ENCODE measurements at regions of chr20 and their contacts with region 1.

Region 1: DNA sequence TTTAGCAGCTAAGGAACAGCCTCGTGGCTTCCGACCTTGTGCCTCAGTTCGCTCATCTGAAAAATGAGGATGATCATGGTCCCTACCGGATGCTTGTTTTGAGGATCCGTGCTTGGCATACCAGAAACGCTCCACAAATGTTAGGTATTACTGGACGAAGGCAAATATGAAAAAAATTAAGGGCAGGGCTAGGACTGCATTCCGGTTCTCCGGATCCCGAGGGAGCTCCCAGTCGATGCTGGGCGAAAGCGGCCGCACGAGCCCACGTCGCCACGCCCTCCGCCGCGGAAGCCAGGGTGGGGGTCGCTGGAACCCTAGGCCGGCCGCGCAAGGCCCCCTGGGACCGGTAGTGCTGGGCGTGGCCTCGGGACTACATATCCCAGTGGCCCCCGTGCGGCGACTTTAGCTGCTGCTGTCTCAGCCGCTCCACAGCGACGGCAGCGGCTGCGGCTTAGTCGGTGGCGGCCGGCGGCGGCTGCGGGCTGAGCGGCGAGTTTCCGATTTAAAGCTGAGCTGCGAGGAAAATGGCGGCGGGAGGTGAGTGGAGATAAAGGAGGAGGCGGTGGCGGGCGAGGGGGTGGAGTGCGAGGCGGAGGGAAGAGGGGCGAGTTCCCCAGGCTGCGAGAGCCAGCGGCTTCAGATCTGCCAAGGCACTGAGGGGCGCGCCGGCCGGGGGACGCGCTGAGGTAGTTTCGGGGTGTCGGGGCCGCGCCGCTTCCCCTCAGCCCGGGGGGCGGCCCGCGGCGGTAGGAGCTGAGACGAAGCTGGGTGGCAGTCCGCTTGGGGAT is at the start of gene NCOA3:
- DNase-seq: peak; percentile 95
- H3K4me3 Mint-ChIP-seq: peak within 1 kb of the TSS; percentile 94
- H3K27ac Mint-ChIP-seq: peak within 1 kb of the TSS; percentile 97
- H3K4me1 Mint-ChIP-seq: peaks cover 59% of the 10 kb centered on the region
- H3K27me3 Mint-ChIP-seq: no peaks in the 10 kb centered on the region
- total RNA-seq, gene NCOA3: 81.0 to 83.1 TPM

Region 2: DNA sequence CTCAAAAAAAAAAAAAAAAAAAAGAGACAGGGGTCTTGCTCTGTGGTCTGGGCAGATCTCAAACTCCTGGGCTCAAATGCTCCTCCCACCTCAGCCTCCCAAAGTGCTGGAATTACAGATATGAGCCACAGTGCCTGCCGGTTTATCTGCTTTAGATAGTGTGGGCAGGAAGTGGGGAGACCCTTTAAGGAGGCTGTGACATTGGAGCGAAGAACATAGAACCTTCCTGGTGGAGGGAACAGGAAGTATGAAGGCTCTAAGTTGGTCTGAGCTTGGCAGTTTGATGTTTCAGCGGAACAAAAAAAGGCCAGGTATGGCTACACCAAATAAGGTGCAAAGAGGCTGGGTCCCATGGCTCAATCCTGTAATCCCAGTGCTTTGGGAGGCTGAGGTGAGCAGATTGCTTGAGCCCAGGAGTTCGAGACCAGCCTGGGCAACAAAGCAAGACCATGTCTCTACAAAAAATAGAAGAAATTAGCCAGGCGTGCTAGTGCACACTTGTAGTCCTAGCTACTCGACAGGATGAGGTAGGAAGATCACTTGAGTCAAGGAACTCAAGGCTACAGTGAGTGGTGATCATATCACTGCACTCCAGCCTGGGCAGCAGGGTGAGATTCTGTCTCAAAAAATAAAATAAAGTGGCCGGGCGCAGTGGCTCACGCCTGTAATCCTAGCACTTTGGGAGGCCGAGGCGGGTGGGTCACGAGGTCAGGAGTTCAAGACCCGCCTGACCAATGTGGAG is 136.5 kb before region 1 on chr20:
- CTCF ChIA-PET with region 1: no interaction called
- POLR2A ChIA-PET with region 1: no interaction called
- DNase-seq: no peak
- H3K4me3 Mint-ChIP-seq: no peak overlapping the region
- H3K27ac Mint-ChIP-seq: no peak overlapping the region
- H3K4me1 Mint-ChIP-seq: peaks cover 10% of the 10 kb centered on the region
- H3K27me3 Mint-ChIP-seq: peaks cover 9% of the 10 kb centered on the region

Region 3: DNA sequence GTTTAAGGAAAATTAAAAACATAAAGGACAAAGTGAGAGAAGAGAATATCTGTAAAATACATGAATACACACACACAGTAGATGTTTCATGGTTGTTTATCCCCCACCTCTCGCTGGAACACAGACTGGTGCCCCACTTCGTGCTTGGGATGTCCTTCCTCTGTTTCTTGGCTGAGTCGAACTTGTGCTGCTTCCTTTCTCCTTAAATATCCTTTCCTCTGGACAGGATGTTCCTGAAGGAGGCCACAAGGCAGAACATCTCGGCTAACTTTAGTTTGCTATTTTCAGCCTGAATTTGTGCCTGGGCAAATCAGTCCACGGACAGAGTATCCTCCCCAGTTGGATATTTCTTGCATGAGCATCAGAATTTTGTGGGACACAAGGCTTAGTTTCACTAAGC is 90.5 kb before region 1 on chr20:
- CTCF ChIA-PET with region 1: no interaction called
- POLR2A ChIA-PET with region 1: interaction called, 14 read pairs
- DNase-seq: no peak
- H3K4me3 Mint-ChIP-seq: no peak overlapping the region
- H3K27ac Mint-ChIP-seq: no peak overlapping the region
- H3K4me1 Mint-ChIP-seq: peaks cover 33% of the 10 kb centered on the region
- H3K27me3 Mint-ChIP-seq: no peaks in the 10 kb centered on the region

Region 4: GRCh38 chr20:47468290-47469050 is 33.2 kb before region 1 on chr20:
- CTCF ChIA-PET with region 1: interaction called, 3 read pairs
- POLR2A ChIA-PET with region 1: interaction called, 17 read pairs
- DNase-seq: no peak
- H3K4me3 Mint-ChIP-seq: no peak overlapping the region
- H3K27ac Mint-ChIP-seq: no peak overlapping the region
- H3K4me1 Mint-ChIP-seq: peaks cover 11% of the 10 kb centered on the region
- H3K27me3 Mint-ChIP-seq: no peaks in the 10 kb centered on the region

Region 5: GRCh38 chr20:47551841-47552240 is 50.2 kb after region 1 on chr20:
- CTCF ChIA-PET with region 1: no interaction called
- POLR2A ChIA-PET with region 1: no interaction called
- DNase-seq: no peak
- H3K4me3 Mint-ChIP-seq: no peak overlapping the region
- H3K27ac Mint-ChIP-seq: no peak overlapping the region
- H3K4me1 Mint-ChIP-seq: peaks cover 12% of the 10 kb centered on the region
- H3K27me3 Mint-ChIP-seq: no peaks in the 10 kb centered on the region

Region 6: DNA sequence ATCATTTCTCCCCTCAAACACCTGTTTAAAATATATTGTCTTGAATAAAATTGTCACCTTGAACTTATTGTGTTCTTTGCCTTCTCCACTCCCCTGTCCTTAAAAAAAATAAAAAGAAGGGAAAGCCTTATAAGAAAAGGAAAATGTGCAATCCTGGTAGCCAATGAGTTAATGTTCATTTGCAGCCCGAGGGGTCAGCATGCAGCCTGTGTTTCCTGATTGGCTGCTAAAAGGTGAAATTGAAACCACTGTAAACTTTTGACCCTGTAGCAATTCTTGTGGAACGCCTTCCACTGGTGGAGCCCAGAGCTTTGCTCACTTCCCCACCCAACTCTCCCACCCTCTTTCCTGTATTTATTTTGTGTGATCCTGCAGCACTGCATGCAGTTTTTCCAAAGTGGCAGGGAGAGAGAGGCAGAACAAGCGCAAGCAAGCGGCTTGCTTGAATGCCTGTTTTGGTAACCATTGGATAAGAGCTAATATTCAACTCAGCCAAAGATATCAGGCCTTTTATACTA is 74.9 kb after region 1 on chr20:
- CTCF ChIA-PET with region 1: no interaction called
- POLR2A ChIA-PET with region 1: interaction called, 11 read pairs
- DNase-seq: no peak
- H3K4me3 Mint-ChIP-seq: peak overlapping the region; percentile 24
- H3K27ac Mint-ChIP-seq: no peak overlapping the region
- H3K4me1 Mint-ChIP-seq: peaks cover 73% of the 10 kb centered on the region
- H3K27me3 Mint-ChIP-seq: no peaks in the 10 kb centered on the region

Region 7: GRCh38 chr20:47620808-47621805 is 119.4 kb after region 1 on chr20:
- CTCF ChIA-PET with region 1: interaction called, 22 read pairs
- POLR2A ChIA-PET with region 1: interaction called, 17 read pairs
- DNase-seq: no peak
- H3K4me3 Mint-ChIP-seq: no peak overlapping the region
- H3K27ac Mint-ChIP-seq: no peak overlapping the region
- H3K4me1 Mint-ChIP-seq: peaks cover 40% of the 10 kb centered on the region
- H3K27me3 Mint-ChIP-seq: no peaks in the 10 kb centered on the region